ENCODE measurements at regions of chr18 and their contacts with region 1.

Region 1: DNA sequence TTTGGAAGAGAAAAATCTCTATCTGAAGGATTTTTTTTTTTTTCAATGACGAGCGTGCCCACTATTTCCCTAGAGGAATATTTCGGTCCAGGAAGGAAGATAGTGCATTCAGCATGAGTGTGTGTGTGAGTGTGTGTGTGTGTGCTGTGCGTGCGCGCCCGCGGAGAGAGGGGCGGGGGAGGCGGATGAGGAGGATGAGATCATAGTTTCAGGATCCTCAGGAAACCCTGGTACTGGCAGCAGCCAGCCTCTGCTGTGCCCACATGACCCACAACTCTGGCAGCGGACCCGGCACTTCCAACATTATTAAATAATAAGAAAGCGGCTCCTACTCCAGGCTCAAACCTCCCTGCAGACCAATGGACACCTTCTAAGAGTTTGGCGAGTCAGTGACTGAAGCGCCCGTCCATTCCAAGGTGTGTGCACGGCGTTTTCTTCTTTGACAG is 217.0 kb upstream of the DTNA start:
- DNase-seq: peak; percentile 80
- ATAC-seq: peak; percentile 86

Region 2: GRCh38 chr18:34592961-34593382 is 99.8 kb after region 1 on chr18:
- intact Hi-C with region 1: loop called (anchors 2 kb)
- DNase-seq: no peak
- ATAC-seq: peak; percentile 91

Region 3: DNA sequence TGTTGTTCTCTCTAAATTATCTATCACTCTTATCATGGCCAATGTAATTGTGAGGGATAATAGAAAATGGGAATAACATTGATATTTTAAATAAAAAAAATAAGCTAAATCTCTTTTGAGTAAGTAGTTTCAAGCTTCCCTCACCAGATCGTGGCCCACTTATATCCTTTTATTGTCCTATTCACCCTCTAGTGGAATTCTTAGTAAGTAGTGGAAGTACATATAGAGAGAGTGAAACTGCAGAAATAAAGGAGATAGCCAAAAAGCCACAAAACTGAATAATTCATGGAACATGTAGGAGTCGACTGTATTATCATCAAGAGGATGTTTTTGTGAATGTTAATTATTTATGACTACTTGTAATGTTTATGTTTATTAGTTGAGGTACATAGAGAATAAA is 150.9 kb after region 1 on chr18:
- intact Hi-C with region 1: loop called (anchors 5 kb)
- DNase-seq: no peak
- ATAC-seq: no peak

Region 4: DNA sequence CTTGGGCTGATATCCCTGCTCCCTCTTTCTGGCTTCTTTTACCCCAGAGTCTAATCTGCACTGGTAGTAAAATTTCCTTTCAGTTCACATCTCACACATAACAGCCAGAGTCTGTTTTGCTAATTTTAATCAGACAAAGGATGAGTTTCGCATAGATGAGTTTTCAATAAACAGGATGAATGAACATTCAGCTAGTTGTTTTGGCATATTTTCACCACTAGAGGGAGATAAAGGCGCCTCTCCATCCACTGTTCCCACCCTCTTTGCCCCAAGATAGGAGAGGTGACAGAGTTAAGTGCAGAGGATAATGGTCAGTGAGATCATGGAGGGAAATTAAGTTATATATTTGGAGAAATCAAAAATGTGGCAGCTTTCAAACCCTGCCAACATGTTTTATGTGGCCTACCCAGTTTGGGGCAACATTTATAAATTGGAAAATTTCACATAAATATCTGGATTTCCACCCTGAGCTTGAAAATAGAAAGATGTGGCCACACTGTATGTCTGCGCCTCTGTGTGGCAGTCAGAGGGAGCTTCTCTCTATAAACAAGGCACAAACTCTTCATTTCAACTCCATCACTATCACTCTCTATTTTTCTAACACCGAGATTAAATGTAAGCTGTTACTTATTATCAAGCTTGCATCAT is 168.5 kb after region 1 on chr18:
- intact Hi-C with region 1: loop called (anchors 2 kb)
- DNase-seq: no peak
- ATAC-seq: no peak

Region 5: GRCh38 chr18:34729264-34729663 is 236.1 kb after region 1 on chr18:
- intact Hi-C with region 1: loop called (anchors 10 kb)
- DNase-seq: no peak
- ATAC-seq: peak; percentile 49